ENCODE measurements at regions of chr20 and their contacts with region 1.

Region 1: DNA sequence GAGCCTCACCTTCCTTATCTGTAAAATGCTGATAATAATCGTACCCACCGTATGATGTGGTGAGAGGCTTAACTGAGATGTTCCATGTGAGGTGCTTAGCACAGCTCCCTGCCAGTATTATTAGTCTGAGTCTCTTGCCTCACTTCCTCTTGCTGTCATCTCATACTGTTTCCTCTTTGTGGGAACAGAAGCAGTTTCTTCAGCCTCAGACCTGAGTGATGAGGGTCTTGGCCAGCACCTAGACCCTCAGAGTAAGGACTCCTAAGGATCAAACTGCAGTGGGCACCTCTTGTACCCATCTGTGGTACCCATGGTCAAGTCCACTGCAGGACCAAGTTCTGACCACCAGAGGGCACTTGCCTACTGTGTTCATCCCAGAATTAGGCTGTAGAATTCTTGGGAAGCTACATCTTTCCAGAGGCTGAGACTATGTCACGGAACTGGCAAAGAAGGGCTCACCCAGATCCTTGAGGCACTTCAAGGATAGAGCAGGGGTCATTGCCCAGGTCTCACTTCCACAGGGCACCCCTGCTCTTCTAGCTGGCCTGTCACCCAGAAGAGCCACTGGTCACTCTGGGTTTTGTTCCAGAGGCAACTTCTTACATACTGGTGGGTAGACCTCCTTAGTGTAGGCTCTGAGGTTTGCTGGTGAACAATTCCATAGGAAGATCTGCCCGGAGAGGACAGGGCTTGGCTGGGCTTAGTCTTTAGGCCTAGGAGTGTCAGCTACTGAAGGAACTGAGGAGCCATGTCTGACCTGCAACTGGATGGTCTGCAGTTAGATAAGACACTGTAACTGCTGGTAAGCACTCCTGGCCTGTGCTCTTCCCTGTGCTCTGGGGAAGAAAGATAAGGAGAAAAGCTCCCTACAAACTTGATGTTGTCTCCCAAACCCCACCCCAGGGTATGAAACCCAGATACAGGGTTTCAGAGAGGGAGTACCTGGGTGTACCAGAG is 20.6 kb upstream of the SGK2 start:
- DNase-seq: no peak
- H3K4me3 ChIP-seq: no peak overlapping the region
- CTCF ChIP-seq: peak; percentile 88

Region 2: GRCh38 chr20:43448748-43449535 is 89.3 kb before region 1 on chr20:
- CTCF ChIA-PET with region 1: interaction called, 10 read pairs
- POLR2A ChIA-PET with region 1: no interaction called
- DNase-seq: no peak
- H3K4me3 ChIP-seq: no peak overlapping the region
- CTCF ChIP-seq: peak; percentile 72

Region 3: DNA sequence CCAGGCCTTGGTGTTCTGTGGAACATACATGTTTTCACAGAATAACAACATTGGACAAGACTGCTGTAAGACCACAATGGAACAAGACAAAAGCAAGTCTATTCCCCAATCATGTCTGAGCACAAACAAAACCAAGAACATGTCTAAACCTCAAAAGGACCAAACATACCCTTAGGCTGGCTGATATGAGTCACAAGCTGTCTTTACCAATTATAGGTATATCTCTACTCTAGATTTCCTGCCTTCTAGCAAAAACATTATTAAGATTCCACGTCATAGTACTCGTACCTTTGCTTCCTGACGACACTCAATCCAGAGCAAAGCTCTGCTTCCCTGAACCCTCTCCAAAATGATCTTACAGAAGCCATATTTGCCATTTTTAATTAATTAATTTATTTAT is 46.1 kb before region 1 on chr20:
- CTCF ChIA-PET with region 1: no interaction called
- POLR2A ChIA-PET with region 1: no interaction called
- DNase-seq: no peak
- H3K4me3 ChIP-seq: no peak overlapping the region
- CTCF ChIP-seq: no peak

Region 4: DNA sequence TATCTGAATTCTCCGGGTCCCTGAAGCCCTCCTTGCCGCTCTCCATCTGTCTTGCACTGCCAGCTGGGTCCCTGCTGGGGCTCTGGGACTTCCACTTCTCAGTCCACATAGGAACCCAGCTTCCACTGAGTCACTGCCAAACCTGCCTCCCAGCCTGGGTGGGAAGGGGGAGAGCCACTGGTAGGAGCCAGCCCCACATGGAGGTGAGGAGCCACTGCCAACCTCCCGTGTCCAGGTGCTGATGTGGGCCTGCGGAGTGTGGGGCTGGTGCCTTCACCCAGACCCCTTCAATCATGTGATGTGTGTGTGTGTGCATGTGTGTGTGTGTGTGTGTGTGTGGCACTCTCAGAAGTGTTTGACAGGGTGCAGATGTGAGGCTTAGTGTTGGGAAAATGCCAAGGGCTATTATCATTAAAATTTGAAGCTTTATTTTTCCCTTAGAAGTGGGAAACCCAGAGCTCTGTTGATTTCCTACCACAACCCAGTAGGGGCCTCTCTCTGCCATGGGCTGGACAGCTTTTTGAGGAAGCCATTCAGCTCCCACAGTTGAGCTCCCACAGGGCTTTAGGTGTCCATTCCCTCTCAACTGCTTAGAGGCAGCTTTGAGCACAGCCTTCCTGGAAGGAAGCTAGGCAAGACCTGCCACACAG is 11.3 kb after region 1 on chr20:
- CTCF ChIA-PET with region 1: interaction called, 45 read pairs
- POLR2A ChIA-PET with region 1: no interaction called
- DNase-seq: no peak
- H3K4me3 ChIP-seq: no peak overlapping the region
- CTCF ChIP-seq: no peak

Region 5: DNA sequence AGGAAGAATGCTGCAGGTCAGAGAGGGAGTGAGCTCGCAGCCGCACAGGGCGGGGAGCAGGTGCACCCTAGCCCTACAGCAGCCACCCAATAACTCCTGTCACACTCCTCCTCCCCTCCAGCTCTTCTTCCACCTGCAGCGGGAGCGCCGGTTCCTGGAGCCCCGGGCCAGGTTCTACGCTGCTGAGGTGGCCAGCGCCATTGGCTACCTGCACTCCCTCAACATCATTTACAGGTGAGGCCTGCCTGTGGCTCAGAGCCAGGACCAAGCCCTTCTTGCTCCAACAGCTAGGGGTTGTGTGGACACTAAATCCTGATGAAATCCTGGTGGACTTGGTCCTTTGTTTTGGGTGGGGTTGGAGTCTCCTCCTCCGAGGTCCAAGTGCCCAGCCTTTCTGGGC is 32.3 kb after region 1 on chr20:
- CTCF ChIA-PET with region 1: interaction called, 12 read pairs
- POLR2A ChIA-PET with region 1: no interaction called
- DNase-seq: no peak
- H3K4me3 ChIP-seq: no peak overlapping the region
- CTCF ChIP-seq: no peak

Region 6: DNA sequence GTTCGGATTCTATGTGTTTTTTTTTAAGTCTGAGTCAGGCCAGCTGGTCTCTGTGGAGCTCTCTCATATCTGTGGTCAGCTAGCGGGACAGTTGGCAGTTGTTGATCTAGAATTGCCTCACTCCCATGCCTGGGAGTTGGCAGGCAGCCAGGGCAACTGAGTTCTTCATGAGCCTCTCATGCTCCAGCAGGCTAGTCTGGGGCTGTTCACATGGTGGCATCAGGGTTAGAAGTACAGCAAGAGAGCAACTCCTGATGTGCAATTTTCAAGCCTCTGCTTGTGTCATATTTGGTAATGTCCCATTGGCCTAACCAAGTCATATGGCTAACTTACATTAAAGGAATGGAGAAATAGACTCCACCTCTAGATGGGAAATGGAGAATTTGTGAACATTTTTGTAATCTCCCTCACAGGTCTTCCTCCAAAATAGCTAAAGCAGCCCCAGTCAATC is 45.8 kb after region 1 on chr20:
- CTCF ChIA-PET with region 1: interaction called, 52 read pairs
- POLR2A ChIA-PET with region 1: no interaction called
- DNase-seq: peak; percentile 94
- H3K4me3 ChIP-seq: no peak overlapping the region
- CTCF ChIP-seq: no peak

Region 7: GRCh38 chr20:43749734-43750294 is 211.6 kb after region 1 on chr20:
- CTCF ChIA-PET with region 1: interaction called, 31 read pairs
- POLR2A ChIA-PET with region 1: no interaction called
- DNase-seq: no peak
- H3K4me3 ChIP-seq: no peak overlapping the region
- CTCF ChIP-seq: peak; percentile 99

Region 8: DNA sequence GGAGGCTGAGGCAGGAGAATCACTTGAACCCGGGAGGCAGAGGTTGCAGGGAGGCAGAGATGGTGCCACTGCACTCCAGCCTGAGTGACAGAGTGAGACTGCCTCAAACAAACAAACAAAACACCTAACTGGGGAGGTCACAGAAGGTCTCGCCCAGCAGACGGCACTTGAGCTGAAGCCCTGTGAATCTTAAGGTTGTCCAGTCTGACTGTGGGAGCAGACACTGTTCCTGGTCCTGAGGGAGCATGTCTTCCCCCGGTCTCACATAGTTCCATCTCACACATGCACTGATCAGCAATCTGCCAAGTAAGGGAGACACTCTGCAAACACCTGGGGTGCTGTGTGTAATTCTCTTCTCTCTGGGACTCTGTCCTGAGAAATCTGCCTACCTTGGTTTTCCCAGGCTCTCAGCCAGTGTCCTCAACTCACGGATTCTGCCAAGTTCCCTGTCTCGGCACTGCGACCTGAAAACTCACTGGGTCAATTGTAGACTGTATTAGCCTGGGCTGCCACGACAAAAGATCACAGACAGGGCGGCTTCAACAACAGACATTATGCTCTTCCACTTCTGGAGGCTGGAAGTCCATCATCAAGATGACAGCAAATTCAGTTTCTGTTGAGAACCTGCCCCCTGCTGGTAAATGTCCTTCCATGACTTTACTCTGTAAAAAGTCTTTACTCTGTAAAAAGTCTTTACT is 554.5 kb after region 1 on chr20:
- CTCF ChIA-PET with region 1: interaction called, 14 read pairs
- POLR2A ChIA-PET with region 1: no interaction called
- DNase-seq: no peak
- H3K4me3 ChIP-seq: no peak overlapping the region
- CTCF ChIP-seq: peak; percentile 33

Measured in AG04449 (cell line).